Mammary epithelial cell (primary cell): ENCODE measurements at regions of chr11 and their contacts with region 1.

Region 1: DNA sequence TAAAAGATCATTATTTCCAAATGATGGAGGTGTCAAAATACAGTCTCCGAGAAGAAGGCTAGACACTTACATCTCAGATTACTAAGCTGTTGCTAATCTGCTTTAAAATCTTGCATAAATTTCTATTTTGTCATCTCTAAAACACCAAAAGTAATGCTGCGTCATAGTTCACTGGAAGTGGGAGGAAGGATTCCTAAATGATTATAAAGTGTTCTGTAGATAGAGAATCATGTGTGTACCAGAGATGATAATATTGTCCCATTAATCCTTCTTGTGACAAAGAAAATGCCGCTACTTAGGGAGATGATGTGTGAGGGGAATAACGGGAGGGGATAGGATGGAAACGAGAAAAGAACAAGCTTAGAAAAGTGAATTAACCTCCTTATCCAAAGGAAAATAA is 268.6 kb downstream of the JRKL start:
- DNase-seq: no peak
- H3K4me3 ChIP-seq: peak overlapping the region in 1 of 3 experiments; percentile 1
- H3K27ac ChIP-seq: no peak overlapping the region
- H3K4me1 ChIP-seq: no peaks in the 10 kb centered on the region
- H3K27me3 ChIP-seq: peaks cover 3% of the 10 kb centered on the region
- CTCF ChIP-seq: no peak

Region 2: GRCh38 chr11:96635655-96636054 is 22.8 kb before region 1 on chr11:
- CTCF ChIA-PET with region 1: no interaction called
- dilution Hi-C with region 1: no loop called
- in situ Hi-C with region 1: no loop called
- intact Hi-C with region 1: loop called (anchors 2 kb)
- DNase-seq: no peak
- H3K4me3 ChIP-seq: no peak overlapping the region
- H3K27ac ChIP-seq: no peak overlapping the region
- H3K4me1 ChIP-seq: no peaks in the 10 kb centered on the region
- H3K27me3 ChIP-seq: no peaks in the 10 kb centered on the region
- CTCF ChIP-seq: no peak

Region 3: DNA sequence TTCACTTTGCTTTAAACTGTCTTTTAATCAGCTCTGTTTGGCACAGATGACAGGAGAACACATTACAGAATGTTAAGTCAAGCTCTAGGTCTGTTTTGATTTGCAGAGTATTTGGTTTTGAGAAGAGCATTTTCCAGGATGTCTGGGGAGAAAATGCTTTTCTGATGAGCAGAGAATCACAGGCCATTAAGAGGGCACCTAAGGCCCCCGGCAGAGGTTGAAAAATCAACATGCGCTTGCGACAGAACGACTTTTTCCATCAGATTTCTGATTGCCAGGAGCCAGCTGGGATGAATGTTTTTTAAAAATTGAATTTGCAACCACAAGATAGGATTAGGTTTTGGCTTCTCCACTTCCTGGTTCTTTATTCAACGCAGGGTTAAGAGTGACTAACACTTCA is 35.9 kb after region 1 on chr11:
- CTCF ChIA-PET with region 1: no interaction called
- dilution Hi-C with region 1: no loop called
- in situ Hi-C with region 1: no loop called
- intact Hi-C with region 1: no loop called
- DNase-seq: no peak
- H3K4me3 ChIP-seq: no peak overlapping the region
- H3K27ac ChIP-seq: no peak overlapping the region
- H3K4me1 ChIP-seq: no peaks in the 10 kb centered on the region
- H3K27me3 ChIP-seq: no peaks in the 10 kb centered on the region
- CTCF ChIP-seq: no peak